ENCODE measurements at regions of chr7 and their contacts with region 1.

Region 1: GRCh38 chr7:150356265-150356897 is 12.2 kb upstream of the REPIN1 start:
- DNase-seq: no peak
- H3K4me3 ChIP-seq: no peak overlapping the region
- H3K27ac ChIP-seq: no peak overlapping the region
- H3K4me1 ChIP-seq: no peaks in the 10 kb centered on the region
- H3K27me3 ChIP-seq: no peaks in the 10 kb centered on the region
- CTCF ChIP-seq: peak; percentile 36 to 61 (median 52)
- POLR2A ChIP-seq: no peak

Region 2: GRCh38 chr7:150420987-150421674 is 64.8 kb after region 1 on chr7:
- intact Hi-C with region 1: loop called (anchors 5 kb)
- DNase-seq: peak; percentile 81 to 85
- H3K4me3 ChIP-seq: no peak overlapping the region
- H3K27ac ChIP-seq: no peak overlapping the region
- H3K4me1 ChIP-seq: no peaks in the 10 kb centered on the region
- H3K27me3 ChIP-seq: no peaks in the 10 kb centered on the region
- CTCF ChIP-seq: peak; percentile 84 to 90 (median 88)
- POLR2A ChIP-seq: no peak

Region 3: DNA sequence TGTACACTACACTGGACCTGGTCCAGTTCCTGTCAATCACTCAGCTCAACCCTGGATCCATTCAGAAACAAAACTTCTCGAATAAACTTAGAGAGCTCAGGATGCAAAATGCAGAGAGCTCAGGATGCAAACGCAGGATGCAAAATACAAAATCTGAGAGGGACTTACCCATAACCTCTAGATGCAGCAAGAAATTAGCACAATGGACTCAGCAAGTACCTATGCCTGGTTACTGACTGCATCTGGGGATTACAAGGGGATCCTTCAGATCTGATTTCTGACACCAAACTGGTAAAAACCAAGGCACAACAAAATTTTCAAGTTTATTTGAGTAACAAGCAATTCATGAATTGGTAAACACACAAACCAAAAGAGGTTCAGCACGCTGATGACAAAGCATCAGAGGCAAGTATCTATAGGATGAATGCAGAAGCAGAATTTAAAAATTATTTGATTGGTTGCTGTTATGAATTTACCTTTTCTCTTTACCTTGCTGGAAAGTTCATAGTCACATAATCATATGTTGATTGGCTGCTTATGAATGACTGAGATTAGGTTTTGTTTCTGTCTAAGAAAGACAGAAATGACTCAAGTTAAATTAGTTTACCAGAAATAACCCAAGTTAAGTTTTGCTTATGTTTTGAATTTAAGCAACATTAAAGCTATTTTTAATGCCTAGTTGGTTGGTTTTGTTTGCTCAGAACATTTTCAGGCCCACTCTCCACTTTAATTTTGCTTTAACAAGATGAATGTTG is 264.4 kb after region 1 on chr7:
- intact Hi-C with region 1: no loop called
- DNase-seq: no peak
- H3K4me3 ChIP-seq: no peak overlapping the region
- H3K27ac ChIP-seq: no peak overlapping the region
- H3K4me1 ChIP-seq: no peaks in the 10 kb centered on the region
- H3K27me3 ChIP-seq: no peaks in the 10 kb centered on the region
- CTCF ChIP-seq: no peak
- POLR2A ChIP-seq: no peak

Region 4: GRCh38 chr7:150716368-150716767 is 360.0 kb after region 1 on chr7 and contains the start of gene GIMAP1:
- intact Hi-C with region 1: no loop called
- DNase-seq: peak in 1 of 2 donors; percentile 51
- H3K4me3 ChIP-seq: peak within 1 kb of the TSS; percentile 20 to 27
- H3K27ac ChIP-seq: peak within 1 kb of the TSS; percentile 58 to 80
- H3K4me1 ChIP-seq: no peaks in the 10 kb centered on the region
- H3K27me3 ChIP-seq: no peaks in the 10 kb centered on the region
- CTCF ChIP-seq: no peak
- POLR2A ChIP-seq: peak in 1 of 2 donors; percentile 46
- total RNA-seq, gene GIMAP1: 4.0 to 19.1 (median 9.9) TPM

Measured in uterus (tissue), 4 donors.